GM13977 (cell line): ENCODE measurements at regions of chrX and their contacts with region 1.

Region 1: DNA sequence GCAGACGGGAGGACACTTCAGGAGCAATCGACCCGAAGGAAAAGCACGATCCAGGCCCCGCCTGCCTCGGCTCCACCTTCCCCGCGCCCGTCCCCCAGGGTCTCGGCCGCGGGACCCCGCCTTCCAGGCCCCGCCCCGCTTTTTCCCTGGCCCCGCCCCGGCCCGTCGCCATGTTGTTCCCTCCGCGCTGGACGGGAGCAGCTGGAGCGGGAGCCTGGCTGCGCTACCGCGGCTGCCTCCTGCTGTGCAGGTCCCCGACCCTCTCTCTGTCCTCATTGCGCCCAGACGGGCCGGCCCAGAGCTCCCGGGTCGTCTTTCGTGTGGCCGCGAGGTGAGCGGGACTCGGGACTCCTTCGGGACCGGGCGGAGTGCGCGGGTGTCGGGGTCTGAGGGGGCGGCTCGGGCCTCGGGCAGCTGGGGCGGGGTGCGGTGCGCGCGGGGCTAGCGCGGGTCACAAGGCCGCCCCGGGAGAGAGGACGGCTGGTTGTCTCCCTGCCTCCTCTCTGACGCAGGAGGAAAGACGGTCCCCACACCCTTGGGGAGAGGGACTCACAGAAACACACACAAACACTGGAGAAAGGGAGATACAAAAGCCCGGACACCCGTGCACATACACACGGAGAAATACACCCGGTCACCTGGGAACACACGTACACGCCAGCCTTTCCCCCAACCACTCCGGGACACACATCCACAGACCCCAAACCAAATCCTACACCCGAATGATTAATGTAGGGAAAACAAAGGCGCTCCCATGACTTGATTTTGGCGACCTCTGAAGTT is at the start of gene RAB9A:
- DNase-seq: peak; percentile 86
- CTCF ChIP-seq: no peak

Region 2: DNA sequence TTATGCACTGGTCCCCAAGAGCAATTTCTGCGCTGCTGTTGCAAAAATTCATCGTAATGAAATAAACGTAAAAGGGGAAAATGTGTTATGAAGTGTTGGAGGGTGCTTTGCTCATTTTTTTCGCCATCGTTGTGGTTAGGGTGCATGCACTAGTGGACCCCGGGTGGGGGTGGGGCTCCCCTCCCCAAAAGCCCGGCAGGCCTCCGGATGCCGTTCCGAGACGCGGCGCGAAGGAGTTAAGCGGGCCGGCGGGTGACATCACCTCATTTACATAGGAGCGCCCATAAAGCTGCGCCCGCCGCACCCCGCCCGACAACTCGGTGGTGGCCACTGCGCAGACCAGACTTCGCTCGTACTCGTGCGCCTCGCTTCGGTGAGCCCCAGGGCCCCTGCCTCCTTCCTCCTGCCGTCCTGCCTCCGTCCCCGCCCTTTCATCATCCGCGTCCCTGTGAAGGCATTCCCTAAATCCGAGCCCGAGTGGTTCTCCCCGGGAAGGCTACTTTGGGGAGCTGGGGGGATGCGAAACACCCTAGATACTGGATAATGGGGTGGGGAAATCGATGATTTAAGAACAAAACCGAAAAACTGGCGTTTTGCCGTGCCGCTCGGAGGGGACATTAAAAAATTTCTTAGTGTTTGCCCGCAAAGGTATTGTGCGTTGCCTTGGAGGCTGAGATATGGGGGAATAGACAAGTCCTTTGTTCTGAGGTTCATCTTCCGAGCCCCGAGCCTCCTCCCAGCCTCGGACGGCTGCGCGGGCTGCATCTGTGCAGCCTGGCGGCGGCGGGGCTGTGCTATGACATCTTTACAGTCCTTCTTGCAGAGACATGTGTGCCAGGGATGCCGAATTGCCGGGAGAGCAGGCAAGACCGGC is 714.1 kb before region 1 on chrX and contains the start of gene TMSB4X:
- in situ Hi-C with region 1: loop called (anchors 25 kb)
- DNase-seq: peak; percentile 74
- CTCF ChIP-seq: no peak

Region 3: GRCh38 chrX:13598877-13599276 is 90.3 kb before region 1 on chrX:
- in situ Hi-C with region 1: loop called (anchors 25 kb)
- DNase-seq: no peak
- CTCF ChIP-seq: peak; percentile 50